Ovary (tissue), 10 donors: ENCODE measurements at regions of chr16 and their contacts with region 1.

Region 1: DNA sequence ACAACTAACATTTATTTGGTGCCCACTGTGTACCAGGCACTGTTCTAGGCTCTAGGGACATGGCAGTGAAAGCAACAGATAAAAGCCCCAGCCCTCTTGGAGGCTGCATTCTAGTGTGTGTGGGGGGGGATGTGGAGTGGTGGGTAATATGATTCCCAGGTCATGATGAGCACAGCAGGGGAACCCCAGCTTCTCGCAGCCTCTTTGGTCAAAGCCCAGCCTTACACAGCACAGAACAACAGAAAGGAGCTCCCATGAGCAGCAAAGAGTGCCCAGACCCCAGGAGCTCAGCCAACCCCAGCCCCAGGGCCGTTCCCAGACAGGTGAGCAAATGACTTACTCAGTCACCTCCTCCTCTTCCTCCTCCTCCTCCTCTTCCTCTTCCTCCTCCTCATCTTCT is 21.9 kb downstream of the CNGB1 start:
- DNase-seq: no peak
- H3K4me3 ChIP-seq: no peak overlapping the region
- H3K27ac ChIP-seq: no peak overlapping the region
- H3K4me1 ChIP-seq: no peaks in the 10 kb centered on the region
- H3K27me3 ChIP-seq: no peaks in the 10 kb centered on the region
- CTCF ChIP-seq: no peak
- EP300 ChIP-seq: no peak
- POLR2A ChIP-seq: no peak

Region 2: DNA sequence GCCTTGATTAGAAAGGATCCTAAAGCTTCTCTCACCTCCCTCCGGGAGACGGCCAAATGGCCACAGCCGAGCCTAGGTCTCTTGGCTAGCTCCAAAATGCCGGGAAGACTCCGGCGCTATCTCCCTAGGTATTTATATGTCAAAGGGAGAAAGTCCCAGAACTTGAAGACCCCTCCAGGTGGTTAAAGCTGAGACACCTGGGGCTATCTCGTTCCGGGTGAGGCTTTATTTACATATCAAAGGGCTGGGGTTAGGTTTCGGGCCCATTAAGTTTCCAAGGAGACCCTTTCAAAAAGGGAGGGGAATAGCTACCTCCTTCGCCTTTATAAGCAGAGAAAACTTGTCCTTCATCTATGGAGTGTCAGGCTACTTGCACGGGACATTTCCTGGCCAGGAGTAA is 75.8 kb before region 1 on chr16:
- intact Hi-C with region 1: loop called in 1 of 4 experiments (anchors 2 kb)
- DNase-seq: no peak
- H3K4me3 ChIP-seq: no peak overlapping the region
- H3K27ac ChIP-seq: no peak overlapping the region
- H3K4me1 ChIP-seq: no peaks in the 10 kb centered on the region
- H3K27me3 ChIP-seq: no peaks in the 10 kb centered on the region
- CTCF ChIP-seq: no peak
- EP300 ChIP-seq: no peak
- POLR2A ChIP-seq: no peak

Region 3: DNA sequence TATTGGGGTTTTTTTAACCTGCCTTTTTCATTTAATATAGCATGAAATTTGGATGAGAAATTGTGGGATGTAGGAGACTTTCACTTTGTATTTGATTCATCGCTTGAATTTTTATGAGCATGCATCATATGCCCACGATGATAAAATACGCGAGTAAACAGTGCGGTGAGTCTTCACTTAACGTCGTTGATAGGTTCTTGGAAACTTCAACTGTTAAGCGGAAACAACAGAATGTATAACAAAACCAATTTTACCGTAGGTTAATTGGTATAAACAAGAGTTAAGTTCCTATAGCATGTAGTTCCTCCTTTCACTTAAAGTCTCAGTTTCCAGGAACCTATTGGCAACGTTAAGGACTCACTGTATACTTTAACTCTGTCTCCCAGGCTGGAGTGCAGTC is 105.3 kb after region 1 on chr16:
- intact Hi-C with region 1: no loop called
- DNase-seq: no peak
- H3K4me3 ChIP-seq: no peak overlapping the region
- H3K27ac ChIP-seq: no peak overlapping the region
- H3K4me1 ChIP-seq: no peaks in the 10 kb centered on the region
- H3K27me3 ChIP-seq: no peaks in the 10 kb centered on the region
- CTCF ChIP-seq: no peak
- EP300 ChIP-seq: no peak
- POLR2A ChIP-seq: no peak